HCT116 (cell line): ENCODE measurements at regions of chr11 and their contacts with region 1.

Region 1: DNA sequence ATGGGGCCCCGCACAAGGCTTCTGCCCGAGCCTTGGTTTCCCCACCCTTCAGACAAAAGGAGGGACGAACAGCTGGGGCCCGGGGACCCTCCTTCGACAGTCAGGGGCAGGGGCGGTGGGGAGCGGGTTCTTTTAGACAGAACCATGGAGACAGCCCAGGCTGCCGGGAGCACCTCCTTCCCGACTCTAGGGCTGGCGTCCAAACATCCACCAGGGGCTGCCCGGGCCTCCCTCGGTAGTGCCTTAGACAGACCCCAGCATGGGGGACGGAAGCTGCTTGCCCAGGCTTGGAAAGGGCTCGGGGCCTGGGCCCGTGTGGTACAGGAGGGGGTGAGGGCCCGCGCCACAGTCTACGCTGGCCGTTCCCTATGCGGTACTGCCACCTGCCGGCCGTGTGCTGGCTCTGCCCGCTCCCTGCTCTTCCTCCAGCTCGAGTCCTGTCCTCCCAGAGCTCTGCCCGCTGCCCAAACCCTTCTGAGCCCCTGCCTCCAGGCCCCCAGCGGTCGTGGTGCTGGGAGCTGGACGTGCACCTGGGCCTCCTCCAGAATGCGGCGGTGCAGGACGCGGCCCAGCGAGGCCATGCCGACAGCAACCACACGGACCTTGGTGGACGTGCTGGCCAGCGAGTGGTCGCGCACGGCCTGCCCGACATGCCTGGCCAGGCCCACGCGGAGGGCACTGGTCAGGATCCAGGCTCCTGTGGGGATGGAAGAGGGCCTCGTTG is 20.1 kb downstream of the TSSC4 start:
- DNase-seq: peak; percentile 40
- ATAC-seq: peak; percentile 94
- H3K4me3 ChIP-seq: no peak overlapping the region
- H3K27ac ChIP-seq: peak overlapping the region; percentile 16; the same call in 1 of the 2 replicates
- H3K4me1 ChIP-seq: peaks cover 0 to 13% of the 10 kb centered on the region in 2 experiments; a peak in 2 of 4 replicates
- H3K27me3 ChIP-seq: no peaks in the 10 kb centered on the region
- CTCF ChIP-seq: peak; percentile 87 to 89 (median 89)
- POLR2A ChIP-seq: no peak
- RAD21 ChIP-seq: peak; percentile 97

Region 2: GRCh38 chr11:1103401-1104325 is 1317.0 kb before region 1 on chr11:
- CTCF ChIA-PET with region 1: no interaction called
- POLR2A ChIA-PET with region 1: no interaction called
- RAD21 ChIA-PET with region 1: no interaction called
- intact Hi-C with region 1: no loop called
- DNase-seq: no peak
- ATAC-seq: no peak
- H3K4me3 ChIP-seq: no peak overlapping the region
- H3K27ac ChIP-seq: no peak overlapping the region
- H3K4me1 ChIP-seq: no peaks in the 10 kb centered on the region
- H3K27me3 ChIP-seq: no peaks in the 10 kb centered on the region
- CTCF ChIP-seq: no peak
- POLR2A ChIP-seq: no peak
- RAD21 ChIP-seq: no peak

Region 3: GRCh38 chr11:1889224-1890120 is 531.2 kb before region 1 on chr11:
- CTCF ChIA-PET with region 1: no interaction called
- POLR2A ChIA-PET with region 1: no interaction called
- RAD21 ChIA-PET with region 1: no interaction called
- intact Hi-C with region 1: no loop called
- DNase-seq: no peak
- ATAC-seq: no peak
- H3K4me3 ChIP-seq: no peak overlapping the region
- H3K27ac ChIP-seq: no peak overlapping the region
- H3K4me1 ChIP-seq: no peaks in the 10 kb centered on the region
- H3K27me3 ChIP-seq: peaks cover 8% of the 10 kb centered on the region; the same call in 1 of the 2 replicates
- CTCF ChIP-seq: no peak
- POLR2A ChIP-seq: no peak
- RAD21 ChIP-seq: no peak

Region 4: GRCh38 chr11:2166091-2166851 is 254.4 kb before region 1 on chr11:
- CTCF ChIA-PET with region 1: interaction called, 23 read pairs
- POLR2A ChIA-PET with region 1: no interaction called
- RAD21 ChIA-PET with region 1: interaction called, 3 read pairs
- intact Hi-C with region 1: loop called (anchors 1 kb)
- DNase-seq: no peak
- ATAC-seq: peak; percentile 86
- H3K4me3 ChIP-seq: no peak overlapping the region
- H3K27ac ChIP-seq: no peak overlapping the region; the same call in 1 of the 2 replicates
- H3K4me1 ChIP-seq: peaks cover 2 to 21% of the 10 kb centered on the region in 2 experiments; a peak in 3 of 4 replicates
- H3K27me3 ChIP-seq: no peaks in the 10 kb centered on the region
- CTCF ChIP-seq: peak; percentile 68 to 72 (median 69); a peak in 5 of 6 replicates
- POLR2A ChIP-seq: no peak
- RAD21 ChIP-seq: peak; percentile 81

Region 5: DNA sequence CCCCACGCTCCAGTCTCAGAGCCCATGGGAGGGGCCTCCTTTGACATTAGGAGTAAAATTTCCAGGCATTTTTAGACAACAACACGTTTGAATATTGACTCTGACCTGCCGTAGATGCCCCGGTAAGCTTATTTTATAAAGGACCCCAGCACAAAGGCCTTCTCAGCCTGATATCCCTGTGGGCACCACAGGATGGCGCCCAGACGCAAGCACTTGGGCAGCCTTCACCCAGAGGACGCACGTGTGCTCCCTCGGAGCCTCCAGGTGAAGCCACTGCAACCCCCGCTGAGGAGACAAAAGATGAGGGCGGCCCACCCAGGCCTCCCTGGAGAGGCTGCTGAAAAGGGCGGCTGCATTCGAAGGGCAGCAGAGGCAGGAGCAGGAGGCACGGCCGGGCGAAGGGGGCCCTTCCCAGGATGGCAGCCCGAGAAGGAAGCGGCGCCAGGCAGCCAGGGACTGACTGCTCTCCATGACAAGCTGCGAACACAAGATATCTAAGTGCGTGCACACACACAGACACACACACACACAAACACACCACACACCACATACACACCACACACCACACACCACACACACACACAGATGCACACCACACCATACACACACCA is 233.9 kb before region 1 on chr11:
- CTCF ChIA-PET with region 1: interaction called, 26 read pairs
- POLR2A ChIA-PET with region 1: no interaction called
- RAD21 ChIA-PET with region 1: interaction called, 4 to 8 read pairs
- intact Hi-C with region 1: no loop called
- DNase-seq: peak; percentile 51
- ATAC-seq: peak; percentile 87
- H3K4me3 ChIP-seq: no peak overlapping the region
- H3K27ac ChIP-seq: no peak overlapping the region; the same call in 1 of the 2 replicates
- H3K4me1 ChIP-seq: peaks cover under 1 to 12% of the 10 kb centered on the region in 2 experiments; a peak in 3 of 4 replicates
- H3K27me3 ChIP-seq: no peaks in the 10 kb centered on the region
- CTCF ChIP-seq: peak in 2 of 3 experiments; percentile 74; a peak in 4 of 6 replicates
- POLR2A ChIP-seq: no peak
- RAD21 ChIP-seq: no peak

Region 6: GRCh38 chr11:2196970-2197770 is 223.5 kb before region 1 on chr11:
- CTCF ChIA-PET with region 1: interaction called, 24 read pairs
- POLR2A ChIA-PET with region 1: no interaction called
- RAD21 ChIA-PET with region 1: interaction called, 4 to 5 read pairs
- intact Hi-C with region 1: loop called (anchors 1 kb)
- DNase-seq: peak; percentile 54
- ATAC-seq: peak; percentile 90
- H3K4me3 ChIP-seq: no peak overlapping the region
- H3K27ac ChIP-seq: no peak overlapping the region; the same call in 1 of the 2 replicates
- H3K4me1 ChIP-seq: peaks cover 5 to 20% of the 10 kb centered on the region in 2 experiments; a peak in 3 of 4 replicates
- H3K27me3 ChIP-seq: no peaks in the 10 kb centered on the region
- CTCF ChIP-seq: peak; percentile 85 to 97 (median 97)
- POLR2A ChIP-seq: no peak
- RAD21 ChIP-seq: peak; percentile 98

Region 7: DNA sequence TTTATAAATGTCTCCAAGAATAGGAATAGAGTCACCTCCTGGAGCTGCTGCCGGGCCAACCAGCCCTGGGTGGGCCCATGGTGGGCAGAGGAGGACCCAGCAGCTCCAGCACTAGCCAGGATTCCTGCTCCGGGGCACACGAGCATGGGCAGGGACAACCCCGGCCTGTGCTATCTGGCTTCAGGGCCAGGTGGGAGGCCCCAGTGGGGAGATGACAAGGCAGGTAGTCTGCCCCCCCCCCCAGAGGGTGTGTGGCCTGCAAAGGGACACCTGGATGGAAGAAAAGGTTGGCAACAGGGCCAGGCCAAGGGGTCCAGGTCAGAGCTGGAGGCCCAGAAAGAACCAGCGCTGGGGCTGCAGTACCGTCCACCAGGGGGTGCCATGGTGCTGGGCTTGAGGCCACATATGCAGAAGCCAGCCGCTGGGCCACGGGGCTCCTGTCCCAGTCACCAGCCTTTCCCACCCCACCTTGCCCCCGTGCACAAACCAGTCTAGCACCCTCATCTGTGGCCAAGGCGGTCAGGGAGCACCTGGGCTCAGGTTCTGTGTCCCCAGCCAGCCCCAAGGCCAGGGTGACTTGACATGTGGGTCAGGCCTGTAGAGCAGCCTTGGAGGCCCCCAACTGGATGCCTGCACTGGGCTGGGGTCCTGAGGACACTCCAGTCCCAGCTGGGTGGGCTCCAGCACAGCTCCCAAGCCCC is 115.4 kb before region 1 on chr11:
- CTCF ChIA-PET with region 1: interaction called, 225 read pairs
- POLR2A ChIA-PET with region 1: interaction called, 5 read pairs
- RAD21 ChIA-PET with region 1: interaction called, 42 to 56 read pairs
- intact Hi-C with region 1: loop called (anchors 1 kb)
- DNase-seq: no peak
- ATAC-seq: peak; percentile 90
- H3K4me3 ChIP-seq: no peak overlapping the region
- H3K27ac ChIP-seq: no peak overlapping the region; the same call in 1 of the 2 replicates
- H3K4me1 ChIP-seq: no peaks in the 10 kb centered on the region
- H3K27me3 ChIP-seq: no peaks in the 10 kb centered on the region
- CTCF ChIP-seq: peak; percentile 84 to 92 (median 90)
- POLR2A ChIP-seq: no peak
- RAD21 ChIP-seq: peak; percentile 95

Region 8: GRCh38 chr11:2400069-2400760 is 20.4 kb before region 1 on chr11 and contains the start of gene TSSC4:
- CTCF ChIA-PET with region 1: interaction called, 42 read pairs
- POLR2A ChIA-PET with region 1: interaction called, 4 read pairs
- RAD21 ChIA-PET with region 1: interaction called in 1 of 2 experiments, 6 read pairs
- intact Hi-C with region 1: loop called (anchors 1 kb)
- DNase-seq: peak; percentile 100
- ATAC-seq: peak; percentile 85
- H3K4me3 ChIP-seq: peak within 1 kb of the TSS; percentile 100
- H3K27ac ChIP-seq: peak within 1 kb of the TSS; percentile 83
- H3K4me1 ChIP-seq: peaks cover 16 to 27% of the 10 kb centered on the region in 2 experiments
- H3K27me3 ChIP-seq: no peaks in the 10 kb centered on the region
- CTCF ChIP-seq: peak in 2 of 3 experiments; percentile 94 to 96; a peak in 4 of 6 replicates
- POLR2A ChIP-seq: peak; percentile 32
- RAD21 ChIP-seq: no peak
- total RNA-seq, gene TSSC4: 47.1 TPM

Region 9: GRCh38 chr11:2452321-2453012 is 31.8 kb after region 1 on chr11:
- CTCF ChIA-PET with region 1: no interaction called
- POLR2A ChIA-PET with region 1: no interaction called
- RAD21 ChIA-PET with region 1: no interaction called
- intact Hi-C with region 1: no loop called
- DNase-seq: no peak
- ATAC-seq: no peak
- H3K4me3 ChIP-seq: no peak overlapping the region
- H3K27ac ChIP-seq: no peak overlapping the region
- H3K4me1 ChIP-seq: no peaks in the 10 kb centered on the region
- H3K27me3 ChIP-seq: no peaks in the 10 kb centered on the region
- CTCF ChIP-seq: no peak
- POLR2A ChIP-seq: no peak
- RAD21 ChIP-seq: no peak

Region 10: GRCh38 chr11:2768471-2769408 is 348.1 kb after region 1 on chr11:
- CTCF ChIA-PET with region 1: no interaction called
- POLR2A ChIA-PET with region 1: no interaction called
- RAD21 ChIA-PET with region 1: no interaction called
- intact Hi-C with region 1: no loop called
- DNase-seq: peak; percentile 38
- ATAC-seq: peak; percentile 75
- H3K4me3 ChIP-seq: 0 out of 4 replicates have a peak overlapping the region, but pooled peaks of 1 of the 2 experiments have one; percentile 16
- H3K27ac ChIP-seq: no peak overlapping the region; the same call in 1 of the 2 replicates
- H3K4me1 ChIP-seq: peaks cover 7 to 28% of the 10 kb centered on the region in 2 experiments; a peak in 3 of 4 replicates
- H3K27me3 ChIP-seq: no peaks in the 10 kb centered on the region
- CTCF ChIP-seq: no peak
- POLR2A ChIP-seq: no peak
- RAD21 ChIP-seq: no peak

Region 11: DNA sequence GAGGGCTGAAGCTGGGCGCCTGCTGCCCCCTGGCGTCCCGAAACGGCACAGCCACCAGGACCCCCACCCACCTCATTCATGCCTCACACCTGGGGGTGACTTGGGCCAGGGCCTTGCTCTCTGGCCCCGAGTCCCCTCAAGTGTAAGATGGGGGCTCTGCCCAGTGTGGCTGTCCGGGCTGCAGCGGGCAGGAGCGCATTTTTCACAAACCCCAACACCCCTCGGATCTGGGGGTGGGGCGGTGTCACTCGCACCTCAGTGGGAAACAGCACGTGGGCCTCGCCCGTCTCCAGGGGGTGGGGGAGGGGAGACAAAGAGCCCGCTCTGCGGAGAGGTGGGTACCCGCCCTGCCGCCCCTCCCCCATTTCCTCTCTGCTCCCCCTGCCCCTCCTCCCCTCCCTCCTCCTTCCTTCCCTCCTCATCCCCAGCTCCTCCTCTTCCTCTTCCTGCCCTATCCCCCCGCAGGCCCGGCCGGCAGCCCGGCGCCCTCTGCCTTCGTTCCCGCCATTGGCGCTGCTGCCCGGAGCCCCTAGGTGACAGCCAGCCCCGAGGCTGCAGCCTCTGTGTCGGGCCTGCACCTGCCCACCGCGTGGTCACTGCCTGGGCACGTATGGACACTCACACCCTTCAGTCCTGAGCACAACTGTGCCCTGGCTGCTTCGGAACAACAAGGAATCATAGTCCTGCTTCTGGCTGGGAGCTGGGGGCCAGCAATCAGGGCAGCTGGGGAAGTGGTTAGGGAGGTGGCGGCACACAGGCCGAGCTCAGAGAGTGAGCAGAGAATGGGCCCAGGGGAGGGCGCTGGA is 471.8 kb after region 1 on chr11:
- CTCF ChIA-PET with region 1: interaction called, 14 read pairs
- POLR2A ChIA-PET with region 1: no interaction called
- RAD21 ChIA-PET with region 1: interaction called in 1 of 2 experiments, 3 read pairs
- intact Hi-C with region 1: no loop called
- DNase-seq: no peak
- ATAC-seq: peak; percentile 65
- H3K4me3 ChIP-seq: peak overlapping the region; percentile 50 to 72
- H3K27ac ChIP-seq: peak overlapping the region; percentile 75
- H3K4me1 ChIP-seq: peaks cover 31 to 58% of the 10 kb centered on the region in 2 experiments
- H3K27me3 ChIP-seq: no peaks in the 10 kb centered on the region
- CTCF ChIP-seq: peak in 2 of 3 experiments; percentile 95 to 96; a peak in 4 of 6 replicates
- POLR2A ChIP-seq: peak; percentile 64
- RAD21 ChIP-seq: no peak